ENCODE measurements at regions of chr6 and their contacts with region 1.

Region 1: GRCh38 chr6:161233984-161234661 is 39.7 kb downstream of the AGPAT4 start:
- DNase-seq: peak in 9 of 10 donors; percentile 59 to 87 (median 69)
- H3K4me3 ChIP-seq: peak overlapping the region in 6 of 59 donors; percentile 6 to 31 (median 18)
- H3K27ac ChIP-seq: peak overlapping the region; percentile 1 to 89 (median 78)
- H3K27me3 ChIP-seq: no peaks in the 10 kb centered on the region
- CTCF ChIP-seq: peak in 1 of 56 donors; percentile 12

Region 2: GRCh38 chr6:161318456-161318855 is 84.3 kb after region 1 on chr6:
- intact Hi-C with region 1: loop called in 1 of 2 experiments (anchors 2 kb)
- DNase-seq: peak in 9 of 10 donors; percentile 35 to 87 (median 60)
- H3K4me3 ChIP-seq: peak overlapping the region in 39 of 59 donors; percentile 2 to 53 (median 26)
- H3K27ac ChIP-seq: peak overlapping the region; percentile 40 to 99 (median 94)
- H3K27me3 ChIP-seq: no peaks in the 10 kb centered on the region
- CTCF ChIP-seq: peak in 21 of 56 donors; percentile 4 to 51 (median 25)

Region 3: GRCh38 chr6:161557333-161558107 is 323.4 kb after region 1 on chr6:
- intact Hi-C with region 1: no loop called
- DNase-seq: no peak
- H3K4me3 ChIP-seq: no peak overlapping the region
- H3K27ac ChIP-seq: no peak overlapping the region
- H3K27me3 ChIP-seq: no peaks in the 10 kb centered on the region
- CTCF ChIP-seq: no peak